AG04450 (cell line): ENCODE measurements at regions of chr12 and their contacts with region 1.

Region 1: GRCh38 chr12:51391283-51392162 is at the start of gene GALNT6:
- DNase-seq: no peak
- H3K4me3 ChIP-seq: peak within 1 kb of the TSS; percentile 68
- H3K27ac ChIP-seq: peak within 1 kb of the TSS; percentile 81
- H3K27me3 ChIP-seq: no peaks in the 10 kb centered on the region
- CTCF ChIP-seq: no peak
- polyA plus RNA-seq, gene GALNT6: 31.1 and 32.1 TPM in 2 replicates

Region 2: GRCh38 chr12:51334764-51335163 is 56.8 kb before region 1 on chr12:
- CTCF ChIA-PET with region 1: no interaction called
- POLR2A ChIA-PET with region 1: no interaction called
- DNase-seq: no peak
- H3K4me3 ChIP-seq: no peak overlapping the region
- H3K27ac ChIP-seq: no peak overlapping the region
- H3K27me3 ChIP-seq: no peaks in the 10 kb centered on the region
- CTCF ChIP-seq: no peak

Region 3: GRCh38 chr12:51371295-51371953 is 20.1 kb before region 1 on chr12:
- CTCF ChIA-PET with region 1: interaction called, 3 read pairs
- POLR2A ChIA-PET with region 1: interaction called, 14 read pairs
- DNase-seq: peak; percentile 90
- H3K4me3 ChIP-seq: no peak overlapping the region
- H3K27ac ChIP-seq: peak overlapping the region; percentile 85
- H3K27me3 ChIP-seq: no peaks in the 10 kb centered on the region
- CTCF ChIP-seq: no peak